K562 (cell line): ENCODE measurements at regions of chr1 and their contacts with region 1.

Region 1: DNA sequence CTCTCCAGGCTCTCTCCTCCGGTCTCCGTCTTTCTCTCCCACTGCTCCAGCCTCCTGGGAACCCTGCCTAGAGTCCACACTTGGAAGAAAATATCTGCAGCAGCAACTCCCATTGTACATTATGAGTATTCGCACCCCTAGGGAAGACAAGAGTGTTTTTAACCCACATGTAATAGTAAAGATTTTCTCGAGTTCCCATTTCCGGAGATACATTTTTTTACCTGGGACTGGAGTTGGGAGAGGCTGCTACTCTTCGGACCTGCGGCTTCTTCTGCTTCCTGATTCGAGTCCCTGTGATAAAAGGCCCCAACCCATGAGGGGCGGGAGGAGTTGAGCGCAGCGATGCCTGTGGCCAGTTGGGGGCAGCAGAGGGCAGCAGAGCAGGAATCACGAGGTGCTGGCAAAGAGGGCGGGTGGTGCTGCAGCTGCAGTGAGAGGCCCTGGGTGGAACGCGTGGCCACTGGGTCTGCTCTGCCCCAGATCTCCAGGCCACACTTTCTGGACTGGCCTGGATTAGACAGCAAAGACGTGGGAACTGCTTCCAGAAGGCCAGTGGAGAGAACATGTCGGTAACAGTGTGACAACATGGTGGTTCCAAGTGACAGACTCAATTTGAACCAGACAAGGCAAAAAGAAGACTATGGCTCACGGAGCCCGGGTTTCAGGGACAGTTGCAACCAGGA is 221.0 kb upstream of the CSF3R start:
- DNase-seq: peak; percentile 87 to 95 (median 92)
- ATAC-seq: peak; percentile 99
- H3K4me3 ChIP-seq: no peak overlapping the region
- H3K27ac ChIP-seq: no peak overlapping the region
- H3K4me1 ChIP-seq: peaks cover 0 to 3% of the 10 kb centered on the region in 2 experiments; a peak in 2 of 5 replicates
- H3K27me3 ChIP-seq: peaks cover 17 to 28% of the 10 kb centered on the region in 2 experiments; a peak in 3 of 5 replicates
- CTCF ChIP-seq: peak; percentile 93 to 98 (median 98)
- EP300 ChIP-seq: no peak
- POLR2A ChIP-seq: no peak
- RAD21 ChIP-seq: peak; percentile 84 to 96

Region 2: GRCh38 chr1:36411674-36412520 is 291.8 kb before region 1 on chr1:
- CTCF ChIA-PET with region 1: no interaction called
- POLR2A ChIA-PET with region 1: no interaction called
- in situ Hi-C with region 1: no loop called
- intact Hi-C with region 1: no loop called
- DNase-seq: peak; percentile 60 to 88 (median 73)
- ATAC-seq: peak; percentile 99
- H3K4me3 ChIP-seq: no peak overlapping the region
- H3K27ac ChIP-seq: peak overlapping the region; percentile 22; the same call in 2 of the 3 replicates
- H3K4me1 ChIP-seq: peaks cover 7 to 8% of the 10 kb centered on the region in 2 experiments; a peak in 3 of 5 replicates
- H3K27me3 ChIP-seq: no peaks in the 10 kb centered on the region
- CTCF ChIP-seq: peak in 2 of 3 experiments; percentile 6 to 29; a peak in 1 of 6 replicates
- EP300 ChIP-seq: no peak
- POLR2A ChIP-seq: peak; percentile 51
- RAD21 ChIP-seq: peak in 1 of 2 experiments; percentile 23; a peak in 2 of 4 replicates

Region 3: GRCh38 chr1:36576118-36576517 is 127.5 kb before region 1 on chr1:
- CTCF ChIA-PET with region 1: no interaction called
- POLR2A ChIA-PET with region 1: no interaction called
- in situ Hi-C with region 1: no loop called
- intact Hi-C with region 1: loop called (anchors 2 kb)
- DNase-seq: peak; percentile 77 to 88 (median 86)
- ATAC-seq: peak; percentile 98
- H3K4me3 ChIP-seq: no peak overlapping the region
- H3K27ac ChIP-seq: no peak overlapping the region
- H3K4me1 ChIP-seq: peaks cover 0 to 3% of the 10 kb centered on the region in 2 experiments; a peak in 2 of 5 replicates
- H3K27me3 ChIP-seq: peaks cover 13 to 44% of the 10 kb centered on the region in 2 experiments
- CTCF ChIP-seq: peak; percentile 90 to 94 (median 93)
- EP300 ChIP-seq: no peak
- POLR2A ChIP-seq: no peak
- RAD21 ChIP-seq: peak; percentile 54 to 87; a peak in 3 of 4 replicates

Region 4: DNA sequence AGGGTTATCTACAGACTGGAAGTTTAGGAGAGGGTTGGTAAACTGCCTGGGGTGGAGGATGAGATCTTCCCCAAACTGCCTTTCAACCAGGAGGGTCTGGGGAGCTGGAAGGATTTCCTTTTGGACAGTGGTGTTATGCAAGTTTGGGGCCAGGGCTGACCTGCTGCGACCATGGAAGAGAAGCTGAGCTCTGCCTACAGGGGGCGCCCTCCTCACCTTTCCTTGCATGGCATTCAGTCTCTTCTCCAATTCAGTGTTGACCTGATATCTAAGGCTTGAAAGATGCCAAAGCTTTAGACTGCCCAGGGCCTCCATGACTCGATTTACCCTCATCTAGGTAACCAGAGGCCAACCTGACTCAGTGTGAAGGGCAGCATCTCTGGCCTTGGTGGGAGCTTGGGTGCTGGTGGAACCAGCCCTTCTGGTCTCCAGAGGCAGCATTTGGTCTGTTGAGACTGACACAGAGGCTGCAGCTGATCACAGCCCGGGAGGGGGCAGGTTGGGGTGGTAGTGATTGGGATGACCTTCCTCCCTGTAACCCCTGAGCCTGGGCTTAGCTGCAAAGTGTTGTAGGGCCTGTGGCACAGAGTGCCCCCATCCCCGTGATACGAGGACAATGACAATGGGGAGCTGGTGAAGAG is 160.6 kb after region 1 on chr1:
- CTCF ChIA-PET with region 1: no interaction called
- POLR2A ChIA-PET with region 1: no interaction called
- in situ Hi-C with region 1: no loop called
- intact Hi-C with region 1: loop called (anchors 10 kb)
- DNase-seq: peak; percentile 55 to 77 (median 70)
- ATAC-seq: peak; percentile 78
- H3K4me3 ChIP-seq: no peak overlapping the region
- H3K27ac ChIP-seq: no peak overlapping the region
- H3K4me1 ChIP-seq: no peaks in the 10 kb centered on the region; a peak in 1 of 5 replicates
- H3K27me3 ChIP-seq: peaks cover 0 to 10% of the 10 kb centered on the region in 2 experiments; a peak in 2 of 5 replicates
- CTCF ChIP-seq: peak; percentile 63 to 88 (median 64)
- EP300 ChIP-seq: no peak
- POLR2A ChIP-seq: no peak
- RAD21 ChIP-seq: no peak

Region 5: GRCh38 chr1:37020653-37021277 is 317.1 kb after region 1 on chr1:
- CTCF ChIA-PET with region 1: no interaction called
- POLR2A ChIA-PET with region 1: no interaction called
- in situ Hi-C with region 1: no loop called
- intact Hi-C with region 1: loop called (anchors 10 kb)
- DNase-seq: peak; percentile 67 to 82 (median 72)
- ATAC-seq: peak; percentile 90
- H3K4me3 ChIP-seq: no peak overlapping the region
- H3K27ac ChIP-seq: no peak overlapping the region
- H3K4me1 ChIP-seq: no peaks in the 10 kb centered on the region
- H3K27me3 ChIP-seq: no peaks in the 10 kb centered on the region
- CTCF ChIP-seq: peak; percentile 53 to 62 (median 61)
- EP300 ChIP-seq: no peak
- POLR2A ChIP-seq: no peak
- RAD21 ChIP-seq: peak in 1 of 2 experiments; percentile 59; a peak in 3 of 4 replicates

Region 6: DNA sequence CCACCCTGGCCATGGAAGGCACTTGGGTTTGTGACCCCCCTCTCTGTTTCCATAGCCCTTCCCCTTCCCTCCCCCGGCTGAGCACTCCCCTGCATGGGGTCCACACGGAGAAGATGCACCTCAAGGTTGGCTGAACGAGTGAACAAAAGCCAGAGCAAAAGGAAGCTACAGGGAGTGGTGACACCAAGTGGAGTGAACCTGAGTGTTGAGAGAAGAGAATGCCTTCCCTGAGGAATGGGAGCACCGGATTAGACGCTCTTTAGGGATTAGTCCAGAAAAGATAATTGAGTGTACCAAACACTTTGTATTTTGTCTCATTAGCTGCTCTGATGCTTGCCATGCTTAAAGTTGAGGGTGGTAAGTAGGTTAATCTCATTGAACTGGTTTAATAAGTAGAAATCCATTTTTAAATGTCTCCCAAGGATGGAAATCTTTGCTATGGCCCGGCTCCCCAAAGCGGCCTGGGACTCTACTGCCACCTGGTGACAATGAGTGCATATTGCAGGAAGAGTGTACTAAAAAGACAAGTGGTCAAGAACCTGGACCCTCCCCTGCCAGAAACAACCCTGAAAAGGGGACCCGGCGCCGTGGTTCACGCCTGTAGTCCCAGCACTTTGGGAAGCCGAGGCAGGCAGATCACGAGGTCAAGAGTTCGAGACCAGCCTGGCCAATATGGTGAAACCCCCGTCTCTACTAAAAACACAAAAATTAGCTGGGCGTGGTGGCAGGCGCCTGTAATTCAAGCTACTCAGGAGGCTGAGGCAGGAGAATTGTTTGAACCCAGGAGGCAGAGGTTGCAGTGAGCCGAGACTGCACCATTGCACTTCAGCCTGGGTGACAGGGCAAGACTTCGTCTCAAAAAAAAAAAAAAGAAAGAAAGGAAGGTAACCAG is 620.1 kb after region 1 on chr1:
- CTCF ChIA-PET with region 1: no interaction called
- POLR2A ChIA-PET with region 1: no interaction called
- in situ Hi-C with region 1: no loop called
- intact Hi-C with region 1: loop called (anchors 5 kb)
- DNase-seq: peak; percentile 67 to 88 (median 86)
- ATAC-seq: peak; percentile 72
- H3K4me3 ChIP-seq: no peak overlapping the region
- H3K27ac ChIP-seq: no peak overlapping the region
- H3K4me1 ChIP-seq: no peaks in the 10 kb centered on the region
- H3K27me3 ChIP-seq: peaks cover 4 to 8% of the 10 kb centered on the region in 2 experiments; a peak in 3 of 5 replicates
- CTCF ChIP-seq: peak; percentile 82 to 87 (median 86)
- EP300 ChIP-seq: no peak
- POLR2A ChIP-seq: no peak
- RAD21 ChIP-seq: peak; percentile 69 to 91